Activated naive CD4-positive, alpha-beta T cell treated with anti-CD3 and anti-CD28 coated beads for 36 hours (primary cell): ENCODE measurements at regions of chr10 and their contacts with region 1.

Region 1: DNA sequence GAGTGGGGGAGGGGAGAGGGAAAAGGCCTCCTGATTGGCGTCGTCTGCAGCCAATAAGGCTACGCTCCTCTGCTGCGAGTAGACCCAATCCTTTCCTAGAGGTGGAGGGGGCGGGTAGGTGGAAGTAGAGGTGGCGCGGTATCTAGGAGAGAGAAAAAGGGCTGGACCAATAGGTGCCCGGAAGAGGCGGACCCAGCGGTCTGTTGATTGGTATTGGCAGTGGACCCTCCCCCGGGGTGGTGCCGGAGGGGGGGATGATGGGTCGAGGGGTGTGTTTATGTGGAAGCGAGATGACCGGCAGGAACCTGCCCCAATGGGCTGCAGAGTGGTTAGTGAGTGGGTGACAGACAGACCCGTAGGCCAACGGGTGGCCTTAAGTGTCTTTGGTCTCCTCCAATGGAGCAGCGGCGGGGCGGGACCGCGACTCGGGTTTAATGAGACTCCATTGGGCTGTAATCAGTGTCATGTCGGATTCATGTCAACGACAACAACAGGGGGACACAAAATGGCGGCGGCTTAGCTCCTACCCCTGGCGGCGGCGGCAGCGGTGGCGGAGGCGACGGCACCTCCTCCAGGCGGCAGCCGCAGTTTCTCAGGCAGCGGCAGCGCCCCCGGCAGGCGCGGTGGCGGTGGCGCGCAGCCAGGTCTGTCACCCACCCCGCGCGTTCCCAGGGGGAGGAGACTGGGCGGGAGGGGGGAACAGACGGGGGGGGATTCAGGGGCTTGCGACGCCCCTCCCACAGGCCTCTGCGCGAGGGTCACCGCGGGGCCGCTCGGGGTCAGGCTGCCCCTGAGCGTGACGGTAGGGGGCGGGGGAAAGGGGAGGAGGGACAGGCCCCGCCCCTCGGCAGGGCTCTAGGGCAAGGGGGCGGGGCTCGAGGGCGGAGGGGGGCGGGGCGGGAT is at the start of gene KAT6B:
- DNase-seq: peak; percentile 100
- H3K4me3 Mint-ChIP-seq: peak within 1 kb of the TSS; percentile 83
- H3K27ac Mint-ChIP-seq: peak within 1 kb of the TSS; percentile 93
- H3K4me1 Mint-ChIP-seq: peaks cover 55% of the 10 kb centered on the region
- H3K27me3 Mint-ChIP-seq: no peaks in the 10 kb centered on the region
- total RNA-seq, gene KAT6B: 17.3 to 17.9 TPM

Region 2: DNA sequence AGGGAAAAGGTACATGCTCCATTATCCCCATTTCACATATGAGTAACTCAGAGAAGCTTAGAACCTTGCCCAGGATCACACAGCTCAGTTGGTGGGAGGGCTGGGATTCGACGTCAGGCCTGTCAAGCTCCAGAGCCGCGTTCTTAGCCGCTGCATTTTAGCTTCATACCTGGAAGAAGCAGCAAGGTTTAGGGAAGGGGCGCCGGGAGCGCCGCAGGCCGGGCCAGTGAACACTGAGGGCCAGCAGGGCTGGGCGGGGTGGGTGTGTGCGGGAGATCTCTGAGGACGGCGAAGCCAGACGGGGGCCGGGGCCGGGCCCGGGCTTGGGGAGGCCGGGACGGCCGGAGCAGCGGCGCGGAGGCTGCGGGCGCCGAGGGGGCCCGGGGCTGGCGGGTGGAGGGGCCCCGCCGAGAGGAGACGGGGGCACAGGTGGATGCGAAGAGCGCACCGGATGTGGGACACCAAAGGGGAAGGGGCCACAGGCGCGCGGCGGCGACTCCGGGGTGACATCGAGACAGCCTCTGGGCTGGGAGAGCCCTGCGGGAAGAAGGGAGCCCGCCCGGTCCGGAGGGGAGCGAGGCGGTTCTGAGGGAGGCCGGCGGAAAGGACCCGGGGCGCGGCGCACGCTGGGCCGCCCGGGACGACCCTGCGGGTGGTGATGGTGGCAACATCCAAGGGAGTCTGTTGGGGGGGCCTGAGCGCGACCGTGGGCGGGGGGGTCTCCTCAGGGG is 1015.5 kb before region 1 on chr10:
- CTCF ChIA-PET with region 1: no interaction called
- intact Hi-C with region 1: loop called (anchors 2 kb)
- DNase-seq: peak; percentile 63
- H3K4me3 Mint-ChIP-seq: peak overlapping the region; percentile 93
- H3K27ac Mint-ChIP-seq: peak overlapping the region; percentile 99
- H3K4me1 Mint-ChIP-seq: peaks cover 47% of the 10 kb centered on the region
- H3K27me3 Mint-ChIP-seq: no peaks in the 10 kb centered on the region

Region 3: GRCh38 chr10:74502963-74503608 is 323.3 kb before region 1 on chr10:
- CTCF ChIA-PET with region 1: no interaction called
- intact Hi-C with region 1: loop called (anchors 1 kb)
- DNase-seq: no peak
- H3K4me3 Mint-ChIP-seq: no peak overlapping the region
- H3K27ac Mint-ChIP-seq: peak overlapping the region; percentile 75
- H3K4me1 Mint-ChIP-seq: peaks cover 52% of the 10 kb centered on the region
- H3K27me3 Mint-ChIP-seq: no peaks in the 10 kb centered on the region

Region 4: DNA sequence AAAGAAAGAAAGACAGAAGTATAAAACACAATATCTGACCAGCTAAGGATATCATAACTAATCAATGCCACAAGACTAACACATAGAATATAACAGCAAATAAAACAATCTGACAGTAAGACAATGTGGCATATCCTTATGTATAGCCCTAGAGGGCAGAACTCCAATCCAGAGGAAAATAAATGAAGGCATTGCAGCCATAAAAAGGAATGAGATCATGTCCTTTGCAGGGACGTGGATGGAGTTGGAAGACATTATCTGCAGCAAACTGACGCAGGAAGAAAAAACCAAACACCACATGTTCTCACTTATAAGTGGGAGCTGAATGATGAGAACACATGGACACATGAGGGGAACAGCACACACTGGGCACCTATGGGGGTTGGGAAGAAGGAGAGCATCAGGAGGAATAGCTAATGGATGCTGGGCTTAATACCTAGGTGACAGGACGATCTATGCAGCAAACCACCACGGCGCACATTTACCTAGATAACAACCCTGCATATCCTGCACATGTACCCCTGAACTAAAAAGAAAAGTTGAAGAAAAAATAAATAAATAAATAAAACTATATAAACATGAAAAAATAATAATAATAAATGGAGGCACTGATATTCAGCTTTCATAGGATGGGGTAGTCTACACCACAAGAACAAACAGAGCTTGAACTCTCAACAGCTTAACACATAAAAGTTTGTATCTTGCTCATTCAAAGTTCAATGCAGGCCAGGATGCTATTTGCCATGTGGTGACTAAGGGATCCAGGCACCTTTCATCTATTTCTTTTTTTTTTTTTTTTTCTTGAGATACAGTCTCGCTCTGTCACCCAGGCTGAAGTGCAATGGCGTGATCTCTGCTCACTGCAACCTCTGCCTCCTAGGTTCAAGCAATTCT is 66.1 kb before region 1 on chr10:
- CTCF ChIA-PET with region 1: no interaction called
- intact Hi-C with region 1: no loop called
- DNase-seq: no peak
- H3K4me3 Mint-ChIP-seq: no peak overlapping the region
- H3K27ac Mint-ChIP-seq: no peak overlapping the region
- H3K4me1 Mint-ChIP-seq: no peaks in the 10 kb centered on the region
- H3K27me3 Mint-ChIP-seq: no peaks in the 10 kb centered on the region

Region 5: GRCh38 chr10:74854610-74855009 is 28.2 kb after region 1 on chr10:
- CTCF ChIA-PET with region 1: interaction called, 6 read pairs
- intact Hi-C with region 1: loop called (anchors 1 kb)
- DNase-seq: no peak
- H3K4me3 Mint-ChIP-seq: peak overlapping the region; percentile 25
- H3K27ac Mint-ChIP-seq: peak overlapping the region; percentile 38
- H3K4me1 Mint-ChIP-seq: peaks cover 40% of the 10 kb centered on the region
- H3K27me3 Mint-ChIP-seq: no peaks in the 10 kb centered on the region

Region 6: GRCh38 chr10:75019370-75019769 is 193.0 kb after region 1 on chr10:
- CTCF ChIA-PET with region 1: interaction called, 3 read pairs
- intact Hi-C with region 1: loop called (anchors 5 kb)
- DNase-seq: no peak
- H3K4me3 Mint-ChIP-seq: no peak overlapping the region
- H3K27ac Mint-ChIP-seq: no peak overlapping the region
- H3K4me1 Mint-ChIP-seq: peaks cover 12% of the 10 kb centered on the region
- H3K27me3 Mint-ChIP-seq: no peaks in the 10 kb centered on the region

Region 7: DNA sequence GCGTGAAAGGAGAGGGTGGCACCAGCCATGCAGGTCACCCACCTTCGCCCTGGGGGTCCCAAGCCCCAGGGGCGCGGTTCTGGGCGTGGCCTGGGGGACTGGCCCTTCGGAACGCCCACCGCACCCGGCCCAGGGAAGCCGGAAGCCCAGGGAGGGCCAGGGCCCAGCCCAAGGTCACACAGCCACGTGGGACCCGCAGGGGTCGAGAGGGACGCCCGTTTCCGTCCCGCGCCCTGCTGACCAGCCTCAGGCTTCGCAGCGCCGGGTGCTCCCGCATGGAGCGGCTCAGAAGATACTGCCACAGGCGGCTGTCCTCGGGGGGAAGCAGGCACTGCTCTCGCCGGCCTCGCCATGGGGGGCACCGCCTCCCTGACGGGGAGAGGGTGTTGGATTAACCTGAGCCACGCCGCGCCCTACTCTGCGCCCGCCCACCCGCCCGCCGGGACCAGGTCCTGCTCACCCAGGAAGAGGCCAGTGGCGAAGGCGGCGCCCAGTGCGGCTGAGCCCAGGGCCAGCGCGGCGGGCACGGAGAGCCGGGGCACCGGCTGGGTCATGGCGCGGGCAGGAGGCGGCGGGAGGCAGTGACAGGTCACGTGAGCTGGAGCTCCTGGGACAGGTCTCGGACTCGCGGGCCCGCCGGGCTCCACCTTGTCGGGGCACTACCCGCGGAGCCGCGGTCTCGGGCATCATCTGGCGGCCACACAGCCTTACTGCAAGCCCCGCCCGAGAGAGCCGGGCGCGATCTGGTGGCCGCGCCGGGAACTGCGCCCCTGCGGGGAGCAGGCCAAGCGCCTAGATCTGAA is 409.2 kb after region 1 on chr10 and contains the start of gene COMTD1:
- CTCF ChIA-PET with region 1: no interaction called
- intact Hi-C with region 1: loop called (anchors 1 kb)
- DNase-seq: peak; percentile 96
- H3K4me3 Mint-ChIP-seq: peak within 1 kb of the TSS; percentile 80
- H3K27ac Mint-ChIP-seq: peak within 1 kb of the TSS; percentile 84
- H3K4me1 Mint-ChIP-seq: peaks cover 18% of the 10 kb centered on the region
- H3K27me3 Mint-ChIP-seq: no peaks in the 10 kb centered on the region
- total RNA-seq, gene COMTD1: 33.2 to 34.8 TPM